Activated naive CD4-positive, alpha-beta T cell treated with anti-CD3 and anti-CD28 coated beads for 36 hours (primary cell): ENCODE measurements at regions of chr1 and their contacts with region 1.

Region 1: DNA sequence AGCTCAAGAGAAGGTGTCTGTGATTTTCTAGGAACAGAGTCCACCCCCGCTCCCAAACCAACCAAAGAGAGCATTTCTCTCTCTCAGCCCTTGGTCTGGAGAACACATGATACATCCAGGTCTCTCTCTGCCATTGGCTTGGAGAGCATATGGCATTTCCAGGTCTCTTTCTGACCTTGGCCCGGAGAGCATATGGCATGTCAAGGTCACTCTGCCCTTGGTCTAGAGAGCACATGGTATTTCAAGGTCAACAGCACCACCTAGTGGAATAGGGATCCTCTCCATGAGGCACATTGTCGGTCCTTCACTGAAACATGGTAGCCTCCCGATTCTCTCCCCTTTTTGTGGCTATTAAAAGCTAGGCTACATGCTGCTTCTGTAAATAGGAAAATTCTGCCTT is 437.7 kb upstream of the OLFM3 start:
- DNase-seq: peak; percentile 14
- H3K4me3 Mint-ChIP-seq: no peak overlapping the region
- H3K27ac Mint-ChIP-seq: no peak overlapping the region
- H3K4me1 Mint-ChIP-seq: no peaks in the 10 kb centered on the region
- H3K27me3 Mint-ChIP-seq: no peaks in the 10 kb centered on the region

Region 2: GRCh38 chr1:101820071-101820470 is 614.4 kb before region 1 on chr1:
- CTCF ChIA-PET with region 1: no interaction called
- intact Hi-C with region 1: loop called (anchors 1 kb)
- DNase-seq: no peak
- H3K4me3 Mint-ChIP-seq: no peak overlapping the region
- H3K27ac Mint-ChIP-seq: no peak overlapping the region
- H3K4me1 Mint-ChIP-seq: no peaks in the 10 kb centered on the region
- H3K27me3 Mint-ChIP-seq: no peaks in the 10 kb centered on the region